ENCODE measurements at regions of chr14 and their contacts with region 1.

Region 1: DNA sequence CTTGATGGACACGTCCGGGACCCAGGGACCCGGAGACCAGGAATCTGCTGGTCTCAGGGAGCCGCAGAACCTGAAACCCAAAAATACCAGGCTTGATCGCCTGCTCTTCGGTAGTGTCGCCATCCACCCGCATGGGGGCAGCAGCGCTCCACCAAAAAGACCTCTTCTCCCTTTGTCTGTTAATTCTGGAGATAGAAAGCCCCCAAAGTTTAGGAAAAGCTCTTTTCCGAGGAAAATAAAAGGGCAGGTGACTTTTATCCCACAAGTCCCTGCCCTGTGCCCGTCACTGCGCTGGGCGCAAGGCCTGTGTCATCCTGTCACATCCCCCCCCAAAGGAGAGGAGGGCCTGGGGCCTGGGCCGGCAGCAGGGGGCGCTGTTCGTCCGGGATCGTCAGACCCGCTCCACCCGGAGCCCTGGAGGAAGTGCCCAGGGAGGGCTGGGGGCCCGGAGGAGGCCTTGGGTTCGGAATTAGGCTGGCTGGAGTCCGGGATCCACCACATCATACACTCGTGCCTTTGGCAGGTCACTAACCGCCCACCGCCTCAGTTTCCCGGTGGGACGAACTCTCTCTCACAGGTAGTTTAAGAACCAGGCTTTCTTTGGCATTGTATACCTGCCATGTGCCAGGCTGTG is 31.9 kb downstream of the DAD1 start:
- DNase-seq: peak; percentile 83
- H3K4me3 ChIP-seq: peak overlapping the region; percentile 20 to 22
- H3K27ac ChIP-seq: peak overlapping the region in 1 of 2 donors; percentile 57
- H3K4me1 ChIP-seq: no peaks in the 10 kb centered on the region
- H3K27me3 ChIP-seq: no peaks in the 10 kb centered on the region
- CTCF ChIP-seq: peak; percentile 95 to 98 (median 96)
- POLR2A ChIP-seq: no peak

Region 2: GRCh38 chr14:22231018-22231417 is 326.1 kb before region 1 on chr14:
- intact Hi-C with region 1: no loop called
- DNase-seq: no peak
- H3K4me3 ChIP-seq: no peak overlapping the region
- H3K27ac ChIP-seq: no peak overlapping the region
- H3K4me1 ChIP-seq: no peaks in the 10 kb centered on the region
- H3K27me3 ChIP-seq: no peaks in the 10 kb centered on the region
- CTCF ChIP-seq: no peak
- POLR2A ChIP-seq: no peak

Region 3: GRCh38 chr14:22386924-22387775 is 170.0 kb before region 1 on chr14:
- intact Hi-C with region 1: loop called (anchors 5 kb)
- DNase-seq: peak; percentile 88
- H3K4me3 ChIP-seq: peak overlapping the region; percentile 0 to 21
- H3K27ac ChIP-seq: no peak overlapping the region
- H3K4me1 ChIP-seq: no peaks in the 10 kb centered on the region
- H3K27me3 ChIP-seq: no peaks in the 10 kb centered on the region
- CTCF ChIP-seq: peak; percentile 71 to 87 (median 79)
- POLR2A ChIP-seq: no peak

Region 4: GRCh38 chr14:22678221-22678620 is 121.1 kb after region 1 on chr14:
- intact Hi-C with region 1: no loop called
- DNase-seq: no peak
- H3K4me3 ChIP-seq: no peak overlapping the region
- H3K27ac ChIP-seq: no peak overlapping the region
- H3K4me1 ChIP-seq: no peaks in the 10 kb centered on the region
- H3K27me3 ChIP-seq: no peaks in the 10 kb centered on the region
- CTCF ChIP-seq: no peak
- POLR2A ChIP-seq: no peak

Region 5: GRCh38 chr14:22726012-22726411 is 168.9 kb after region 1 on chr14:
- intact Hi-C with region 1: no loop called
- DNase-seq: no peak
- H3K4me3 ChIP-seq: no peak overlapping the region
- H3K27ac ChIP-seq: no peak overlapping the region
- H3K4me1 ChIP-seq: no peaks in the 10 kb centered on the region
- H3K27me3 ChIP-seq: no peaks in the 10 kb centered on the region
- CTCF ChIP-seq: no peak
- POLR2A ChIP-seq: no peak

Region 6: DNA sequence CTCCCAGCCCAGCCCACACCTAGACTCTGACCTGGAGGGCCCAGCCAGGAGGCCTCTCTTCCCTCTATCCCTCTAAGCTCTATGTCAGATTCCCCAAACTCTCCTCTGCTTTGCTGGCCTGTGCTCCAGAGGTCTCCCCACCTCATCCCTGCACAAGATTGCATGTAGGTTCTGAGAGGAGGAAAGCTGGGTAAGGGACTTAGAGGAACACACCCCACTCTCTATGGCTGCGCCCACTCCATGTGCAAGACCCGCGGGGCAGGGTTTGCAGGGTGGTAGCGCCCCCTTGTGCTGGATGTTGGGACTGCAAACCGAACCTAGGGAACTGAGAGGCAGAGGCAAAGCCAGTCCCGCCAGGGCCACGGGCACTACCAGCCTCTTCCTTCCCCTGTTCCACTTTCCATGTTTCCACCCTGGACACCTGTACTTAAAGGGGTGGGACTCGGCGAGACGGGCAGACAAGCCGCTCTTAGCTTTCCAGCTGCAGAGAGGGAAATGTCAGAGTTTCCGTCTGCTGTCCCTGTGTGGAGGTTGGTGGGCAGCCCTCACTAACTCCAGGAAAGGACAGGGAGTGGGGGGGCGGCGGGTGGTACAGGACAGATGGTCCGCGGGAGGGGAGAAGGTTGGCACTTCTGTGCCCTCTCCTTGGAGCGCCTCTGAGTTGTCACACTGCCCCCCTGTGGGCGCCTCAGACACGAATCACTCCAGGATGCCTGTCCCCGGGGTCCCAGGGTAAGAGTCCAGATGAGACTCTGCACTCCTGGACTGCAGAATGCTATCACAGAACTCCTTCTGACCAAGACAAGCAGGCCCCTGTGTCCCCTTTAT is 296.0 kb after region 1 on chr14:
- intact Hi-C with region 1: loop called (anchors 10 kb)
- DNase-seq: peak; percentile 94
- H3K4me3 ChIP-seq: peak overlapping the region; percentile 21 to 32
- H3K27ac ChIP-seq: no peak overlapping the region
- H3K4me1 ChIP-seq: peaks cover 22% of the 10 kb centered on the region
- H3K27me3 ChIP-seq: no peaks in the 10 kb centered on the region
- CTCF ChIP-seq: peak; percentile 88 to 93 (median 90)
- POLR2A ChIP-seq: no peak

Measured in testis (tissue), 5 donors.